ENCODE measurements at regions of chr2 and their contacts with region 1.

Region 1: GRCh38 chr2:176039375-176039774 is 37.3 kb upstream of the LNPK start:
- DNase-seq: no peak
- H3K4me3 ChIP-seq: no peak overlapping the region
- H3K27ac ChIP-seq: no peak overlapping the region
- H3K4me1 ChIP-seq: no peaks in the 10 kb centered on the region
- H3K27me3 ChIP-seq: no peaks in the 10 kb centered on the region
- CTCF ChIP-seq: no peak

Region 2: DNA sequence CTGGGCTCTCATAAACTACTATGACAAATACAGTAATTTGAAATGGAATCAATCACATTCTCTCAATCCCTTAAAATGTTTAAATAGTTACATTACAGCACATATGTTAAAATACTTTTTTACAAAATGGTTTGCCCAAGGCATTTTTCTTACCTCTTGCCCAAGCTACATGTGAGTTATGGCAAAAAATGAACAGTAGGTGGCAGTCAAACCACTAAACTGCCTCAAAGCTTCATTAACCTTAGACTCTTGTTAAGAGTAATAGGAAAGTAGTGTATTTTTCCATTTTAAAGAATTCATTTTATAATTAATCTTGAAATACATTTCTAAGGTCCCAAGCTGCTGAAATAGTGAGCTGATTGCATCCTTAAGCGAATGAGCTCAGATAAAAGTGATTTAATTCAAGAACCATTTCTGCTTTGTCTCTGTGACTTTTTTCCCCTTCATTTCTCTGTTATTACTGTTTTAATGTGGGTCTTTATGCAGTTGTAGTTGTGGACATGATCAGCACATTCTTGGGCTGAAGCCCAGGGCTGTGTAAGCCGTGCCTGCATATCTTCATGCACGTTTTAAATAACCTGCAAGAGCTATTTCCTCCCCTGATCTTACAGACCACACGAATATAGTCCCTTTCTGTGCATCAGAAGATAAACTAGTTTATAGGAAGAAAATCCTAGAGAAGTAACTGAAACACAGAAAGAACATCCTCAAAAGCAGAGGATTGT is 349.1 kb before region 1 on chr2:
- CTCF ChIA-PET with region 1: interaction called, 19 read pairs
- POLR2A ChIA-PET with region 1: no interaction called
- intact Hi-C with region 1: no loop called
- DNase-seq: peak; percentile 38 to 64
- H3K4me3 ChIP-seq: no peak overlapping the region
- H3K27ac ChIP-seq: no peak overlapping the region
- H3K4me1 ChIP-seq: no peaks in the 10 kb centered on the region
- H3K27me3 ChIP-seq: peaks cover 31% of the 10 kb centered on the region
- CTCF ChIP-seq: peak; percentile 94